Activated CD4-positive, alpha-beta T cell treated with anti-CD3 and anti-CD28 coated beads for 36 hours (primary cell): ENCODE measurements at regions of chr9 and their contacts with region 1.

Region 1: DNA sequence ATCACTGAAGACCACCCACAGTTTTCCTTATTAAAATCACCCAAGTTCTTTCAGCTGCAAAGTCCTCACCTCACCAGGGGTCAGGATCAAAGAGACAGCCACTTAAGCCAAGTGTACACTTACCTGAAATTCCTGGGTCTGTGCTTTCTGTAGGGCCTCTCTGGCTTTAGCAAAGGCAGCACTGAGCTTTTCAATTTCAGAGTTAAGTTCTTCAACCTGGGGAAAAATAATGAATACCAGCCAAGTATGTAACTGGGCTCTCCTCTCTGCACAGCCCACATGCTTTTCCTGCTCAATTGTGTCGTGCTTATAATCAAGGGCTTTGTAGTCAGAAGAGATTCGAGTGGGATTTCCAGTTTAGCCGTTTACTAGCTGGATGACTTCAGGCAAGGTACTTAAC is 55.1 kb downstream of the CDK5RAP2 start:
- DNase-seq: no peak
- ATAC-seq: no peak
- H3K4me3 Mint-ChIP-seq: no peak overlapping the region
- H3K27ac Mint-ChIP-seq: no peak overlapping the region
- H3K4me1 Mint-ChIP-seq: no peaks in the 10 kb centered on the region
- H3K27me3 Mint-ChIP-seq: no peaks in the 10 kb centered on the region

Region 2: GRCh38 chr9:120257483-120257882 is 267.4 kb before region 1 on chr9:
- CTCF ChIA-PET with region 1: no interaction called
- POLR2A ChIA-PET with region 1: no interaction called
- intact Hi-C with region 1: no loop called
- DNase-seq: no peak
- ATAC-seq: no peak
- H3K4me3 Mint-ChIP-seq: no peak overlapping the region
- H3K27ac Mint-ChIP-seq: no peak overlapping the region
- H3K4me1 Mint-ChIP-seq: no peaks in the 10 kb centered on the region
- H3K27me3 Mint-ChIP-seq: peaks cover 13% of the 10 kb centered on the region

Region 3: DNA sequence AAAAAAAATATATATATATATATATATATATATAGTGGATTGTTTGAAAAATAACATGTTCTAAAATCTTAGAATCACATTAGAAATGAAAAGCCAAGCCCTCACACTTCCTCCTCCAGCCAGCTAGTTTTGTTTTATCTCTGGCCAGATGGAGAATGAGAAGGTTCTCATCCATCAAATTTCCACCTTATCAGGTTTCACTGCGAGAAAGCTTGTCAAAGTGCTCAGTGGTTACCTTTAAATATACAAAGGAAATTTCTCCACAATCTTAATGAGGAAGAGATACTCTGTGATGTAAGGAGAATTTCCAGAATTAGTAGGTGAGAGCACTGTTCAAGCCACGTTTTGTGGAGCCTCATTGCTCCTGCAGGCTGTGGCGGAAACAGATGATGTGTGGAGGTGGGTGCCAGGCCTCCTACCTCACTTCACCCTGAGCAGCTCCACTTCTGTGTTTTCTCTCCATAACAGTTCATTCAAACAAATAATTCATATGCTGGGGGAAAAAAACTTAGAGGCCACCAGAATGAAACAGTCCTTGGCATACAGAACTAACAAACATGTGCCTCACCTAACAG is 16.8 kb before region 1 on chr9:
- CTCF ChIA-PET with region 1: interaction called, 3 read pairs
- POLR2A ChIA-PET with region 1: interaction called, 10 read pairs
- intact Hi-C with region 1: no loop called
- DNase-seq: no peak
- ATAC-seq: no peak
- H3K4me3 Mint-ChIP-seq: no peak overlapping the region
- H3K27ac Mint-ChIP-seq: no peak overlapping the region
- H3K4me1 Mint-ChIP-seq: peaks cover 11% of the 10 kb centered on the region
- H3K27me3 Mint-ChIP-seq: no peaks in the 10 kb centered on the region

Region 4: GRCh38 chr9:120544441-120544840 is 19.6 kb after region 1 on chr9:
- CTCF ChIA-PET with region 1: interaction called, 3 read pairs
- POLR2A ChIA-PET with region 1: no interaction called
- intact Hi-C with region 1: loop called in 1 of 2 experiments (anchors 1 kb)
- DNase-seq: no peak
- ATAC-seq: no peak
- H3K4me3 Mint-ChIP-seq: no peak overlapping the region
- H3K27ac Mint-ChIP-seq: no peak overlapping the region
- H3K4me1 Mint-ChIP-seq: peaks cover 2% of the 10 kb centered on the region
- H3K27me3 Mint-ChIP-seq: no peaks in the 10 kb centered on the region